Common myeloid progenitor, CD34-positive (primary cell): ENCODE measurements at regions of chr13 and their contacts with region 1.

Region 1: GRCh38 chr13:20160847-20161274 is at the start of gene GJA3:
- DNase-seq: peak in 2 of 3 donors; percentile 43 to 54
- H3K4me3 ChIP-seq: peak within 1 kb of the TSS; percentile 8 to 69 (median 42)
- H3K27ac ChIP-seq: no peak within 1 kb of the TSS
- H3K4me1 ChIP-seq: peaks cover 0 to 18% (median 17%) of the 10 kb centered on the region in 4 experiments
- H3K27me3 ChIP-seq: peaks cover 29 to 73% (median 39%) of the 10 kb centered on the region in 5 experiments

Region 2: DNA sequence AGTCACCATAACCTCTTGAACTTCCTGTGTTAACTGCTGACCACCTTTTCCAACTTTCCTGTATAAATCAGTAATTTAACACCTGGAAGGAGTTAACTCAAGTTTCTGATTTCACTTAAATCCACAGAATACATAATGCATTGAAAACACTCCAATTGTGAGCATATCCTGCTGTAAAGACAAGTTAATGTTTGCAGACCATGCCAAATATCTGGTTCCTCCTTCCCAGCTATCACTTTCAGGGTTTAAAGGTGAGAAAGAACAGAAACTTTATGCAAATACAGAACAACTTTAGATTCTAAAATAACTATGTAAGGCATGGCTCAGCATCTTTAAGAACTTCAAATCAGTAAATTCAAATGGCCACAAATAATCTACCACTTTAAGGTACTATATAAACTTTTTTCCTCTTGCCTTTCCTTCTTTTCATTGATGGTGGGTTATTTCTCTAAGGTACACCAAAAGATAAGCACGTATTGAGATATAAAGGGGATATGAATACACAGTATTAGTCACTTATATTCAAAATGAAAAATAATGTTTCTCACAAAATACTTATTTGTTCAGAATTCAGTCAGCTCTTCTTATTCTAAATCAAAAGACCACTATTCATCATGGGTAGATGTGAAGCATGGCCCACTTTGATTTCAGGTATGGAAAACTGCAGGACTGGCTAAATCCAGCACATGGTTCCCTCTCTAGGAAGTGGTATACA is 592.9 kb before region 1 on chr13:
- CTCF ChIA-PET with region 1: no interaction called
- POLR2A ChIA-PET with region 1: no interaction called
- DNase-seq: no peak
- H3K4me3 ChIP-seq: no peak overlapping the region
- H3K27ac ChIP-seq: no peak overlapping the region
- H3K4me1 ChIP-seq: peaks cover 0 to 1% (median 0%) of the 10 kb centered on the region in 4 experiments
- H3K27me3 ChIP-seq: peaks cover 0 to 3% (median 0%) of the 10 kb centered on the region in 5 experiments

Region 3: DNA sequence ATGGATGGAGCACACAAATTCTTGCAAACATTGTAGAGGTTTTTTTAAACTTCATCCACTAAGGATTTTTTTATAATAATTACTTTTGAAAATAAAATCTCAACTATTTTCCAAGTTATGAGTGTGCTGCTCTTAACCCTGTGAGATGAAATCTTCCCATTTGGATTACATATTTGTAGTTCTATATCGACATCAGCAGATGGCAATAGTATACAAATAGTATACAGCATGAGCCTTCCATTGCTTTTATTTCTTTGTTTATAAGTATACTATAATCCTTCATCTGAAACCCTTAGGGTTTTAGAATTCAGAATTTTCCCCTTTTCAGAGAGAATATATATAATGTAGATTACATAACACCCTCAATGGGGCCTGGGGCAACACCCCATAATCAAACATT is 70.5 kb before region 1 on chr13:
- CTCF ChIA-PET with region 1: interaction called, 13 read pairs
- POLR2A ChIA-PET with region 1: no interaction called
- DNase-seq: peak; percentile 18 to 44 (median 42)
- H3K4me3 ChIP-seq: no peak overlapping the region
- H3K27ac ChIP-seq: no peak overlapping the region
- H3K4me1 ChIP-seq: no peaks in the 10 kb centered on the region
- H3K27me3 ChIP-seq: peaks cover 0 to 3% (median 0%) of the 10 kb centered on the region in 5 experiments

Region 4: DNA sequence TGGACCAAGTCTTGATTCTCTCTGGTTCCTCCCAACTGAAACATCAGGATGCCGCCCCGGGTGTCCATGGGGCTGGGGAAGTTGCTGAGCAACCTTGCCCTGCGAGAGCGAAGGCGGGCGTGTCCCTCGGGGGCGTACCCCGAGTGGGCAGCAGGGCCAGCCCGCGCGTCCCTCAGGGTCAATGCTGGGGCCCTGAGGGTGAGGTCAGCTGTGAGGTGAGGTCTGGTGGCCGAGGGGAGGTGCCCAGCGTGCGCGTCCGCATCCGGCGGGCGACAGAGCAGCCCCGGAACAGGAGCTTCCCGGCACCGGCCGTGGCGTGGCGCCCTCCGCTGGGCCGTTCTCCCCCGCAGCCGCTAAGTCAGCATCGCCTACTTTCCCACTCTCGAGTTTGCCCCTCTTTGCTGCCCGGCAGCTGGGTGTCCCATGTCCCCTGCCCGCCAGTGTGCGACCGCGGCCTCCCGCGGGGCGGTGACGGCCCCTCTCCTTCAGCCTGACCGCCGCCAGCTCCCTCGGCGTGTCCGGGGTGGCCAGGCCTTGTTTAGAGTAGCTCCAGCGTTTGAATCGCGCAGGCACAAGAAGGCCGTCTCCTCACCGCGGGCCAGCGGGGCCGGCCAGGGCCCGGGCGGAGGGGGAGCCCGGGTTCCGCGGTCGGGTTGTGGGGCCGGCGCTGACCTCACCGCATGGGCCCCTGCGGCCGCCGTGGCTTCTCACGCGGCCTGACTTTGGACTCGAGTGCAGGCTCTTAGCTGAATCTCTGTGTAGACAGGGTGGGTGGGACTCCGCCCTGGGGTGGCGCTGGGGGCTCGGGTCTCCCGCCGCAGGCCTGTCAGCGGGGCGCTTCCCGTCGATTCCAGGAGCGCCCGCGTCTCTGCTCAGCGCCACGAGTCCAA is 33.0 kb before region 1 on chr13:
- CTCF ChIA-PET with region 1: interaction called, 14 read pairs
- POLR2A ChIA-PET with region 1: no interaction called
- DNase-seq: peak; percentile 26 to 62 (median 37)
- H3K4me3 ChIP-seq: peak overlapping the region; percentile 39 to 86 (median 66)
- H3K27ac ChIP-seq: no peak overlapping the region
- H3K4me1 ChIP-seq: peaks cover 4 to 35% (median 28%) of the 10 kb centered on the region in 4 experiments
- H3K27me3 ChIP-seq: peaks cover 5 to 36% (median 14%) of the 10 kb centered on the region in 5 experiments